ENCODE measurements at regions of chr6 and their contacts with region 1.

Region 1: GRCh38 chr6:125477844-125478243 is 176.1 kb upstream of the HDDC2 start:
- DNase-seq: no peak
- ATAC-seq: peak; percentile 44
- H3K4me3 ChIP-seq: no peak overlapping the region
- H3K27ac ChIP-seq: no peak overlapping the region
- H3K4me1 ChIP-seq: peaks cover 0 to 1% of the 10 kb centered on the region in 2 donors
- H3K27me3 ChIP-seq: no peaks in the 10 kb centered on the region

Region 2: DNA sequence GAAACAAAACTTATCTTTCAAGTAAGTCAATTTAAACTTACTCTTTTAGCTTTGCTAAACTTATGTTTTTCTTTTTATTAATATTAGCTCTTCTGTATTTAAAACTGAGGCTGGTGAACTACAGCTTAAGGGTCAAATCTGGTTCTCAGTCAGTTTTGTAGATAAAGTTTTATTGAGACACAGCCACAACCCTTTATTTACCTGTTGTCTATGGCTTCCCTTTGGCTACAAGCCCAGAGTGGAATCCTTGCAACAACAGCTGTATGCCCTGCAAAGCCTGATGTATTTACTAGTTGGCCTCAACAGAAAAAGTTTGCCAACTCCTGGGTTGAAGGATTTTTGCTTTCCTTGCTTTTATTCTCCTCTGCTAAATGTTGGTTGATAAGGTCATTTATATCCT is 1007.0 kb before region 1 on chr6:
- intact Hi-C with region 1: no loop called
- DNase-seq: no peak
- ATAC-seq: no peak
- H3K4me3 ChIP-seq: no peak overlapping the region
- H3K27ac ChIP-seq: no peak overlapping the region
- H3K4me1 ChIP-seq: no peaks in the 10 kb centered on the region
- H3K27me3 ChIP-seq: no peaks in the 10 kb centered on the region

Region 3: DNA sequence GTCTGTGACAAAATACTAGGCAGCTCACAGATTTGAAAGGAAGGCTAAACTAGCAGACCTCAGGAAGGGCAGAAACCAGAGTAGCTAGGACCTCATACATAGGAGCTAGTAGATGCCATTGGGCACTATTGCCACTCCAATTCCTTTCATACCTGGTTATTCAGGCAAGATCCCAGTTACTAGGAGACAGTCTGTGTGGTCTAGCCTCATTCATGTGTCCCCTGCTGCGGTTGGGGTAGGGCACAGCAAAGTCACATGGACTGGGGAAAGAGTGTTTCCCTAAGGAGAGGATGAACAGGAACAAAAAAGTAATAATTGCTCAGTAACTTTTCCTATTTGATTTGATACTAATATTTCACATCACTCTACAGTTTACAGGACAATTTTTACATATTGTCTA is 67.0 kb after region 1 on chr6:
- intact Hi-C with region 1: loop called in 1 of 2 experiments (anchors 5 kb)
- DNase-seq: no peak
- ATAC-seq: no peak
- H3K4me3 ChIP-seq: no peak overlapping the region
- H3K27ac ChIP-seq: no peak overlapping the region
- H3K4me1 ChIP-seq: peaks cover 0 to 2% of the 10 kb centered on the region in 2 donors
- H3K27me3 ChIP-seq: peaks cover 0 to 3% of the 10 kb centered on the region in 2 donors

Region 4: DNA sequence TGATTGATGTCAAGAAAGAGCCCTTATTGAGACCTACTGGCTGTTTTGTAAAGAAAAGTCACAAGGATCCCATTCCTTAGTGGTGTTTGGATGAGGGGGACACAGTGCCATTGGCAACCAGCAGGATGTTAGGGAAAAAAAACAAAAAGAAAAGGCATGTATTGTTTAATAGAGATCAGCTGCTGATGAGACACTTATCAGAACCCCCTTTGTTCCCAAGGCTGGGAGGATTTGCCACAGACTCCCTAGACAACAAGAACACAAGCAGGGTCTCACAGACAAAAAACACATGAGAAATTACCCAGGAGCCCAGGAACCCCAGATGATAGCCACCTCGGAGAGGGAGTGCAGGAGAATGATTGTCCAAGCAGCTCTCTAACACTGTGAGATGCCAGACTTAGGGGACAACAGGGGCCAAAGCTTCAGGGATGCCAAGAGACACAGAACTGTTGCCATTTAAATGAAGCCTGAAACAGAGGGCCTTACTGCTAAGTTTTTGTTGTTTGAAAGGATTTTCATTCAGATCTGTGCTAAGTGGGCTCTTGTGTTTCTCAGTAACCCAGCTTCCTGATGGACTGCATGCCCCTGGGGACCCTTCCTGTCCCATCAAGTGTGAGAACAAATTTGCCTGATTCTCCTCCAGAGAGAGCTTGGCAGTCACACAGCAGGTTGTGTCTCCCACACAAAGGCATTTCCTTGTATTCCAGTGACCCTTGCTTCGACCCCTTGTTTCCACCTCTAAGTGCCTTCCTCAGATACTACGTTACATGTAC is 222.9 kb after region 1 on chr6:
- intact Hi-C with region 1: no loop called
- DNase-seq: no peak
- ATAC-seq: peak; percentile 44
- H3K4me3 ChIP-seq: no peak overlapping the region
- H3K27ac ChIP-seq: peak overlapping the region; percentile 48 to 87
- H3K4me1 ChIP-seq: peaks cover 0 to 2% of the 10 kb centered on the region in 2 donors
- H3K27me3 ChIP-seq: no peaks in the 10 kb centered on the region